Head of caudate nucleus (tissue), 42 donors: ENCODE measurements at regions of chr3 and their contacts with region 1.

Region 1: GRCh38 chr3:197456261-197457091 is 99.3 kb downstream of the BDH1 start:
- DNase-seq: peak; percentile 74 to 94 (median 86)

Region 2: DNA sequence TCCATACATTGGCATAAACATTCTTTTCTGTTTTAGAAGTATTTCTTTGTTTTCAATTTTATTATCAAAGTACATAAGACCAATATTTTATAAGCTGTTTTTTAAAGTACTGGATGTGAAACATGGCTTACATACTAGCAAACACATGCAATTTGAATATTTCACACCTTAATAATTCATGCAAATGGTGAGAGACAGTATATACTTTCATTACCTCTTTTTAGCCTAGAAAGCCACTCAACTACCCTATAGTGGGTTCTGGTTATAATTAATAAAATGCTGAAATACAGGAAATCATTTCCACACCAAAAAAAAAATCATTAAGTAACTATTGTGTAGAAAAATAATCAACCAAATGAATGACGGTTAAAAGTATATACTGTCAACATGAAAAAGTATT is 388.4 kb before region 1 on chr3:
- intact Hi-C with region 1: no loop called
- DNase-seq: no peak

Region 3: GRCh38 chr3:197256836-197257444 is 199.5 kb before region 1 on chr3:
- intact Hi-C with region 1: loop called (anchors 10 kb)
- DNase-seq: peak in 19 of 42 donors; percentile 9 to 83 (median 52)

Region 4: GRCh38 chr3:198071602-198072285 is 615.3 kb after region 1 on chr3:
- intact Hi-C with region 1: no loop called
- DNase-seq: peak in 12 of 42 donors; percentile 14 to 81 (median 38)